Activated T-helper 1 cell treated with anti-CD3 and anti-CD28 coated beads, Interleukin-12 subunit alpha, Interleukin-12 subunit beta, Interleukin-2, Interleukin-4 antibody, amounts not matched to agents 30 ng/mL and 10 ng/mL and 1 ng/mL, durations not matched to agents 14 hours and 24 hours and 36 hours (primary cell): ENCODE measurements at regions of chr22 and their contacts with region 1.

Region 1: DNA sequence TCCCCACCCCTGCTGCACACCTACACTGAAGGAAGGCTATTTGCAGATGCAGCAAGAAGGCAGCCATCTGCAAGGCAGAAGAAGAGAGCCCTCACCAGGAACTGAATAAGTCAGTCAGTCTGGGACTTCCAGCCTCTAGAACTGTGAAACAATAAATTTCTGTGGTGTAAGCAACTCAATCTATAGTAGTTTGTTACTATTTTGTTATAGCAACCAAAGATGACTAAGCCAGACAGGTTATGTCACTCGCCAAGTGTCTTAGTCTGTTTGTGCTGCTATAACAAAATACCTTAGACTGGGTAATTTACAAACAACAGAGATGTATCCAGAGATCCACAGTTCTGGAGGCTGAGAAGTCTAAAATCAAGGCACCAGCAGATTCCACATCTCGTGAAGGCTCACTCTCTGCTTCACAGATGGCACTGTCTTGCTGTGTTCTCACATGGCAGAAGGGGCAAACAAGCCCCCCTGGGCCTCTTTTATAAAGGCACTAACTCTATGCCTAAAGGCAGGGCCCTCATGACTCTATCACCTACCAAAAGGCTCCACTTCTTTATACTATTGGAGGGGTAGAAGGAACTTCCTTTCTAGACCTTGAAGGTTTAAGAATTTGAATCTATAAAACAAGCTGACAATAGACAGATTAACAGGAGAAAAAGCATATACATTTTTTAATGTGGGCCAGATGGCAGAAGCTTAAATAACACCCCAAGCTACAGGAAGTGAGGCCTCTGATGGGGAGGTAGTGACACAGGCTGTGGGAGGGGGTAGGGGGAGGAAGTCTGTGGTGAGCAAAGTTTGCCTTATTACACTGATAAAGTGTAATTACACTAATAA is 12.3 kb downstream of the APOL6 start:
- DNase-seq: no peak
- H3K4me3 Mint-ChIP-seq: peak overlapping the region; percentile 42
- H3K27ac Mint-ChIP-seq: peak overlapping the region; percentile 86
- H3K4me1 Mint-ChIP-seq: peaks cover 68% of the 10 kb centered on the region
- H3K27me3 Mint-ChIP-seq: no peaks in the 10 kb centered on the region

Region 2: GRCh38 chr22:35678836-35679235 is 18.3 kb after region 1 on chr22:
- intact Hi-C with region 1: loop called (anchors 1 kb)
- DNase-seq: no peak
- H3K4me3 Mint-ChIP-seq: no peak overlapping the region
- H3K27ac Mint-ChIP-seq: peak overlapping the region; percentile 45
- H3K4me1 Mint-ChIP-seq: peaks cover 16% of the 10 kb centered on the region
- H3K27me3 Mint-ChIP-seq: peaks cover 3% of the 10 kb centered on the region

Region 3: GRCh38 chr22:35697142-35697541 is 36.6 kb after region 1 on chr22:
- intact Hi-C with region 1: loop called (anchors 5 kb)
- DNase-seq: peak; percentile 40
- H3K4me3 Mint-ChIP-seq: no peak overlapping the region
- H3K27ac Mint-ChIP-seq: no peak overlapping the region
- H3K4me1 Mint-ChIP-seq: no peaks in the 10 kb centered on the region
- H3K27me3 Mint-ChIP-seq: no peaks in the 10 kb centered on the region

Region 4: DNA sequence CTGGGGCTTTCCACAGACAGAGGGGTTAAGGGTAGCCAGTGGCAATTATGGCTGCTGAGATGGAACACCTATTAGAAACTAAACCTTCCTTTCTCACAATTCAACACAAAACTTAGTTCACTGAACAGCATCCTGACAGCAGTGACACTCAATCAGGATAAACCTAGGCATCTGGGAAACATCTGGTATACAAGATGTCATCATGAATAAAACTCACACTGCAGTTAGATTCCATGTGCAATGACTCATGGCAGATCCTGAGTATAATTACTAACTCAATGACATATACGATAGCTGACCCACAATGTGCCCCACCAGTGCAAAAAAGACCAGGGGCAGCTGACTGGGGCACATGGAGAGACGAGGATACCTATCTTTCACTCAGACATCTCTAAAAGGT is 350.4 kb after region 1 on chr22:
- intact Hi-C with region 1: no loop called
- DNase-seq: no peak
- H3K4me3 Mint-ChIP-seq: no peak overlapping the region
- H3K27ac Mint-ChIP-seq: no peak overlapping the region
- H3K4me1 Mint-ChIP-seq: no peaks in the 10 kb centered on the region
- H3K27me3 Mint-ChIP-seq: peaks cover 9% of the 10 kb centered on the region